Mammary epithelial cell (primary cell): ENCODE measurements at regions of chr2 and their contacts with region 1.

Region 1: GRCh38 chr2:64052468-64053241 is 33.4 kb upstream of the VPS54 start:
- DNase-seq: peak; percentile 23
- H3K4me3 ChIP-seq: no peak overlapping the region
- H3K27ac ChIP-seq: no peak overlapping the region
- H3K4me1 ChIP-seq: peaks cover 33% of the 10 kb centered on the region
- H3K27me3 ChIP-seq: no peaks in the 10 kb centered on the region
- CTCF ChIP-seq: no peak

Region 2: DNA sequence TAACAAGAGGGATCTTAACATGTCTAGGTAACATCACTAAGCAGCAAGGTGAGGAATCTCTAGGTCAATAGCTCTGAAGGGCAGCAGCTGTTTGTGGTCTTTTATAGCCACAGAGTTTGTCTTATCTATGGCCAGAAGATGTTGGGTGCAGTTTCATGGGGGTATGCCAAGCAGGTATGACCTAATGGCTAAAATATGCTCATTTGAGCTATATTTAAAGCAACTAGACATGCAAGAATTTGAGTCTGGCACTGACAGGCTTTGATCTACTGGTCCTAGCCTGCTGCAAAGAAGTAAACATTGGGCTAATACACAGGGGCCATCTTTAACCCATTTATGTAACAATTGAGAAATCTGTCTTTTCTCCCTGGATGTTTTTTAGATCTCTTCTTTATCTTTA is 224.9 kb before region 1 on chr2:
- CTCF ChIA-PET with region 1: interaction called, 10 read pairs
- dilution Hi-C with region 1: no loop called
- in situ Hi-C with region 1: no loop called
- intact Hi-C with region 1: no loop called
- DNase-seq: peak; percentile 73
- H3K4me3 ChIP-seq: no peak overlapping the region
- H3K27ac ChIP-seq: no peak overlapping the region
- H3K4me1 ChIP-seq: peaks cover 8% of the 10 kb centered on the region
- H3K27me3 ChIP-seq: no peaks in the 10 kb centered on the region
- CTCF ChIP-seq: no peak

Region 3: DNA sequence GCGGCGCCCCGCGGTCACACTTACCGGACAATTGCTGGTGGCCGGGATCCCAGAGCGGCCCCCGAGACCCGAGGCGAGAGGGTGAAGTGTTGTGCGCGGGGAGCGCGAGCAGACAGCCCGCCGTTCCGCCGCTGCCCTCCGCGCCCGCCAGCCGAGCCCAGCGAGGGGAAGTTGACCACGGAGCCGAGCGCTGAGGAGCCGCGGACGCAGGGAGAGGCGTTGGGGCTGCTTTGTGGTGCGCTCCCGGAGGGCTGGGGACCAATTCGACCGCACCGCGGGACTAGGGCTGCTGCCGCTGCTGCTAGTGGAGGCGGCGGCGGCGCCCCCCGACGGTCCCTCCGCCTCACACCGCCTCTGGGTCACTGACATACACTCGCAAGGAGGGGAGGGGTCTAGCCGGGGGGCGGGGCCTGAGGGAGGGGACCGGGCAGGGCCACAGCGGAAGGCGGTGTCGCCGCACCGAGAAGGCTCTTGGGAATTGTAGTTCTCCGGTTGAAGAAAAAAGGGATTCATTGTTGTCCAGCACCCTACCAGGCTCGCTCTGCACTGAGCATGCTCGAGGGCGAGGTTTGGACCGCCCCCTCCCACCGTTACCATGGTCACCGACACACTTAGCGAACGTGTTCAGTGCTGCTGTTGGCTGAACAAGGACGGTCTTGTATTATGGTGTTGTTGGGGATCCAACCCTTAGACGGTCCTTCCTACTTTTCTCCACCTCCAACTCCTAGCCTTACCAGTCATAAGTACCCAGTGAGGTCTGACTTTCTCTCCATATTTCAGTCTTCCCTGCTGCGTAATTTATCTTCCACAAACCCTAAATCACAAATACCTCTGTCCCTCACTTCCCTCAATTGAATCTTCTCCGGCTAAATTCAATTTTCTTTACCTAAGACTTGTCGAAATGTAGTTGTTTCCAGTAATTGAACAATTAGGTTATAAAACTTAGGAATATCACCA is 91.7 kb after region 1 on chr2 and contains the start of gene PELI1:
- CTCF ChIA-PET with region 1: no interaction called
- dilution Hi-C with region 1: no loop called
- in situ Hi-C with region 1: no loop called
- intact Hi-C with region 1: loop called (anchors 1 kb)
- DNase-seq: peak; percentile 99
- H3K4me3 ChIP-seq: peak within 1 kb of the TSS; percentile 92 to 96 (median 94)
- H3K27ac ChIP-seq: peak within 1 kb of the TSS; percentile 94
- H3K4me1 ChIP-seq: peaks cover 12% of the 10 kb centered on the region
- H3K27me3 ChIP-seq: no peaks in the 10 kb centered on the region
- CTCF ChIP-seq: peak in 1 of 2 donors; percentile 41
- total RNA-seq, gene PELI1: 18.9 to 26.7 TPM

Region 4: GRCh38 chr2:64311948-64312621 is 259.4 kb after region 1 on chr2:
- CTCF ChIA-PET with region 1: interaction called, 30 read pairs
- dilution Hi-C with region 1: no loop called
- in situ Hi-C with region 1: loop called (anchors 5 to 10 kb)
- intact Hi-C with region 1: loop called (anchors 1 kb)
- DNase-seq: peak; percentile 98
- H3K4me3 ChIP-seq: no peak overlapping the region
- H3K27ac ChIP-seq: peak overlapping the region; percentile 99
- H3K4me1 ChIP-seq: peaks cover 26% of the 10 kb centered on the region
- H3K27me3 ChIP-seq: no peaks in the 10 kb centered on the region
- CTCF ChIP-seq: peak; percentile 48 to 76

Region 5: GRCh38 chr2:64488050-64488974 is 435.7 kb after region 1 on chr2:
- CTCF ChIA-PET with region 1: no interaction called
- dilution Hi-C with region 1: no loop called
- in situ Hi-C with region 1: loop called (anchors 25 kb)
- intact Hi-C with region 1: loop called (anchors 1 kb)
- DNase-seq: peak; percentile 48
- H3K4me3 ChIP-seq: no peak overlapping the region
- H3K27ac ChIP-seq: no peak overlapping the region
- H3K4me1 ChIP-seq: peaks cover 20% of the 10 kb centered on the region
- H3K27me3 ChIP-seq: no peaks in the 10 kb centered on the region
- CTCF ChIP-seq: peak; percentile 85 to 93

Region 6: DNA sequence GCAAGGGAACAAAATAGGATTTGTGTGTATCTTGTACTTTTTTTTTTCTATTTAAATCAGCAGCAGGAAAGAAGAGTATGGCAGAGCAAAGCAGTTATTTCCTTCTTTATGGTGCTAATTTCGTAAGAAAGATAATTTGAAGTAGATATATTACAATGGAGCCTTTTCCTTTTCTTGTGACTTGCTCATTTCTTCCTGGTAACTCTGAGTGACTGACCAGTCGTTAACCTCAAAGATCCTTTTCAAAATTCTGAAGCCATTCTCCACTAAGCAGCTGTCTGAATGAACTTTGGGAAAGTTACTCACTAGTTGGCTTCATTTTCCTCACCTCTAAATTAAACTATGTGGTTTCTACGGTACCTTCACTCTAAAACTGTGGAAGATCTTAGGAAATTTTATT is 496.1 kb after region 1 on chr2:
- CTCF ChIA-PET with region 1: no interaction called
- dilution Hi-C with region 1: no loop called
- in situ Hi-C with region 1: no loop called
- intact Hi-C with region 1: no loop called
- DNase-seq: no peak
- H3K4me3 ChIP-seq: no peak overlapping the region
- H3K27ac ChIP-seq: no peak overlapping the region
- H3K4me1 ChIP-seq: peaks cover 1% of the 10 kb centered on the region
- H3K27me3 ChIP-seq: no peaks in the 10 kb centered on the region
- CTCF ChIP-seq: no peak

Region 7: GRCh38 chr2:64562148-64562784 is 509.6 kb after region 1 on chr2:
- CTCF ChIA-PET with region 1: no interaction called
- dilution Hi-C with region 1: no loop called
- in situ Hi-C with region 1: no loop called
- intact Hi-C with region 1: loop called (anchors 2 kb)
- DNase-seq: no peak
- H3K4me3 ChIP-seq: no peak overlapping the region
- H3K27ac ChIP-seq: no peak overlapping the region
- H3K4me1 ChIP-seq: peaks cover 6% of the 10 kb centered on the region
- H3K27me3 ChIP-seq: no peaks in the 10 kb centered on the region
- CTCF ChIP-seq: peak; percentile 29 to 30

Region 8: DNA sequence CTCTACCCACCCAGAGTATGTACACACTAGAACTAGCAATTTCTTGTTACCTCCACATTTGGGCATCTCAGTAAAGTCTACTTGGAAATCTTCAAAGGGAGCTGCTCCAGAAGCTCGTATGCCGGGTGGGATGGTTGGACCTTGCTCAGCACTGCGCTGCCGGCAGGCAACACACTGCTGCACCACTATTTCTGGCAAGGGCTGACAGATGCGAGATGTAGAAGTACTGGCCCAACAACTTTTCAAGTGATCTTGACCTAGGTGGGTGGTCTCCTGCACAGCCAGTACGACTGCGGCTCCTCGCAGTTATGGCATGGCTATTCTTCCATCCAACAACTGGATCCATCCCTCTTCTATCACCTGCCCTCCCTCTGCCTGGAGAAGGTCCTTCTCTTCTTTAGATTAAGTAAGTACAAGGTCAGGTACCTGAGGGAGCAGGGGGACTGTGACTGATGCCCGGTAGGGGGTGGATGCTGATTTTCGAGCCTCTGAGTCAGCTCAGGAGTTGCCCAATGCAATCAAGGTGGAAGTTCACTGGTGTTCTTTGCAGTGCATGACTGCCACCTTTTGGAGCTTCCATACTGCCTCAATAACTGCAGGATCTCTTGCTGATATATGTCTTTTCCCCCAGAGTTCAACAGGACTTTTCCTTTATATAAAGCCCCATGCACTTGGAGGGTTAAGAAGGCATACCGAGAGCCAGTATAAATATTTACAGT is 836.1 kb after region 1 on chr2:
- CTCF ChIA-PET with region 1: no interaction called
- dilution Hi-C with region 1: no loop called
- in situ Hi-C with region 1: loop called (anchors 10 to 25 kb)
- intact Hi-C with region 1: loop called (anchors 1 kb)
- DNase-seq: peak; percentile 80
- H3K4me3 ChIP-seq: no peak overlapping the region
- H3K27ac ChIP-seq: no peak overlapping the region
- H3K4me1 ChIP-seq: no peaks in the 10 kb centered on the region
- H3K27me3 ChIP-seq: no peaks in the 10 kb centered on the region
- CTCF ChIP-seq: peak; percentile 73 to 80